ENCODE measurements at regions of chr1 and their contacts with region 1.

Region 1: GRCh38 chr1:108125312-108126138 is 74.6 kb downstream of the SLC25A24 start:
- DNase-seq: no peak
- ATAC-seq: peak; percentile 95

Region 2: DNA sequence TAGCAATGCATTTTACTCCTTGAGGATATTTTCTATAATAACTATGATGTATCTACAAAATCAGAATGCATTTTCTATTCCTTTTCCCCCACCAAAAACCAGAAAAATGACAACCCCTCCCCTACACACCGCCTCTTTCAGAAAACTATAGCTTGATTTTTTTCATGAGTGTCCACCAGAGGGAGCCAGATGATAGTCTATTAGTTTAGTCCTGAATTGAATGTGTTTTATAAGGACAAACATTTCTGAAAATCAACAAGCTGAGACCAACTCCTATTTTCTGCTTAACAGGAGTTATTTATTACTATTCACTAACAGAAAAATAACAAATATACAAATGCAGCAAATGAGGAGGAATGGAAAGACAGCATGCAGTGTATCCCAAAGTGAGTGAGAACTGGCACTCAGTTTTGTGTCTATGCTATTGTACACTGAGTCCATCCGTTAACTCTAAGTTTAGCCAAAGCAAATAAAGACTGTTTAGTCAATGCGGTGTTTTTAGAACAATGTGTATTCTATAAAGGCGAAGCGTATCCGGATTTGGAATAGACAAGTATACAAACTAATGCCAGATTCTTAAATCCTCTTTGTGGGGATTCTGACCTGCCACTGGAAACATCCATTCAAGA is 343.2 kb before region 1 on chr1:
- intact Hi-C with region 1: loop called (anchors 2 kb)
- DNase-seq: no peak
- ATAC-seq: peak; percentile 52